ENCODE measurements at regions of chr12 and their contacts with region 1.

Region 1: GRCh38 chr12:75641031-75641780 is 129.8 kb upstream of the KRR1 start:
- DNase-seq: peak; percentile 78
- H3K4me3 Mint-ChIP-seq: peak overlapping the region; percentile 1
- H3K27ac Mint-ChIP-seq: peak overlapping the region; percentile 79
- H3K4me1 Mint-ChIP-seq: peaks cover 31% of the 10 kb centered on the region
- H3K27me3 Mint-ChIP-seq: no peaks in the 10 kb centered on the region

Region 2: DNA sequence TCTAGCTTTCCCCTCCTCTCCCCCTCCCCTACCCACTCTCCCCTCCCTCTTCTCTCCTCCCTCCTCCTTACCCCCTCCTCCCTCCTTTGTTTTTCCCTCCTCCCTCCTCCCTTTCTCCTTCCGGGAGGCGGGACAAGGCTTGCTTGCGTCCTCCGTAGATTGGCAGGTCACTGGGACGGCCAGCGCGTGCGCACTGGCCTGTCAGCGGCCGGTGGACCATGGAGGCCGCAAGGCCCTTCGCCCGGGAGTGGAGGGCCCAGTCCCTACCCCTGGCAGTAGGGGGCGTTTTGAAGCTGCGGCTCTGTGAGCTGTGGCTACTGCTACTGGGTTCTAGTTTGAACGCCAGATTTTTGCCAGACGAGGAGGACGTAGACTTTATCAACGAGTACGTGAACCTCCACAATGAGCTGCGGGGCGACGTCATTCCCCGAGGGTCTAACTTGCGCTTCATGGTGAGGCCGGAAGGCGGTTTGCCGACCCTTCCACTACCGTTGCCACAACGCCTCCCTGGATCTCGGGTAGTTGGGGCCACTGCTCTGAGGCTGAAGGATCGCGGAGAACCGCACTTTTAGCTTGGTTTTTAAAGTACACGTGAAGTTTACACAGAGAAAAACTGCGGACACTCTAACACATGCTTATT is 250.2 kb before region 1 on chr12 and contains the start of gene GLIPR1L2:
- intact Hi-C with region 1: loop called (anchors 10 kb)
- DNase-seq: peak; percentile 95
- H3K4me3 Mint-ChIP-seq: peak within 1 kb of the TSS; percentile 94
- H3K27ac Mint-ChIP-seq: peak within 1 kb of the TSS; percentile 92
- H3K4me1 Mint-ChIP-seq: peaks cover 27% of the 10 kb centered on the region
- H3K27me3 Mint-ChIP-seq: peaks cover 3% of the 10 kb centered on the region
- total RNA-seq, gene GLIPR1L2: 0.36 TPM in 1 of 2 replicates, not detected in the other

Region 3: GRCh38 chr12:75511116-75512048 is 129.8 kb before region 1 on chr12 and contains the start of gene KRR1:
- intact Hi-C with region 1: loop called (anchors 5 kb)
- DNase-seq: peak; percentile 97
- H3K4me3 Mint-ChIP-seq: peak within 1 kb of the TSS; percentile 98
- H3K27ac Mint-ChIP-seq: peak within 1 kb of the TSS; percentile 100
- H3K4me1 Mint-ChIP-seq: peaks cover 31% of the 10 kb centered on the region
- H3K27me3 Mint-ChIP-seq: peaks cover 3% of the 10 kb centered on the region
- total RNA-seq, gene KRR1: 134 and 141 TPM in 2 replicates

Region 4: DNA sequence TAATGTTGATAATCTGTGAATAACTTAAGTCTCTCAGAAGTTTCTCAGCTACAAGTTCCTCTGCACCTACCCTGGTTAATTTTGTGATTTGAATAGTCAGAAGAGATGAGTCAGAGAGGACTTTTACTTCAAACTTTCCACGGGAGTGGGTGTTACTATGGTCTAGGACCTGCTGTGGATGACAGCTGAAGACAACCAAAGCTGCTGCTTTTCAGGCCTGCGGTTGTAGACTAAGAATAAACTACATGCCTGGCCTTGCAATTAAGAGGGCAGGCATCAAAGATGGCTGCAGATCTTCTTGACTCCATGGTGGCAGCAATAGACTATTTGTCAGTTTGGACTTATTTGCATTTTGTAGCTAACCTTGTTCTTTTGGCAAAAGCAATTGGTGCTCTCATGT is 97.3 kb after region 1 on chr12:
- intact Hi-C with region 1: loop called (anchors 5 kb)
- DNase-seq: peak; percentile 64
- H3K4me3 Mint-ChIP-seq: no peak overlapping the region
- H3K27ac Mint-ChIP-seq: peak overlapping the region; percentile 59
- H3K4me1 Mint-ChIP-seq: peaks cover 17% of the 10 kb centered on the region
- H3K27me3 Mint-ChIP-seq: peaks cover 5% of the 10 kb centered on the region

Region 5: DNA sequence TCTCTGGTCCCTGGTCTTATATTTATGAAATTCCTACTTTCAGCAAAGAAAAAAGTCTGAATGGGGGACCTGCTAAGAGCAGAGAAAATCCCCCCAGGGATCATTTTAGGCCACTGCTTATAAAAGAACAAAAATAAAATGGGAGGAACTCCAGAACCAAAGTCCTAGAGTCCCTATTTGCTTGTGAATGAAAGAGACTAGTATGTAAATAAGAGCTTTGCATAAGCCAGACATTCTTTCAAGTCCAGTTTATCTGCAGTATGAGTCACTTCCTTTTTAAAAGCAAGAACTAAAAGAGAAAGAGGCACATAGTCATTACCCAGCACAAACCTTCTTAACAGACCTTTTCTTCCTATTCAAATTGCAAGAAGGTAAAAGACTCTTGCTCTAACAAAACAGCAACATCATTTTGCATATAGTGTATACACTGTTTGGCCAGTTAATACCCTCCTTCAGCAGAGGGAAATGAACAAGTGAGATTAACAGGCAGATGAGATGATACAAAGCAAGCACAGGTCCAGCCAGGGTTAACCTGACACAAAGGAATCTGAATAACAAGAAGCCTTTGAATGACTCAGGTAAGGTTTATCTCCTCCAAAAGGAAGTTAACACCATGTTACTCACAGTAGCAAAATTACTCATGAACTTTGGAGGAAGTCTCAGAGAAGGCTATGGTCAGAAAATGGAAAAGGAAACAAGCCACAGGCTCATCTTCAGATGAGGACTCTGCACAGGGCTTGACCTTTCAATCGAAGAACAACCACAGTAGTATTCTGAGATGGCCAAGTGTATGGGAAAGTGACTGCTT is 303.1 kb after region 1 on chr12:
- intact Hi-C with region 1: loop called (anchors 2 kb)
- DNase-seq: peak; percentile 77
- H3K4me3 Mint-ChIP-seq: peak overlapping the region; percentile 67
- H3K27ac Mint-ChIP-seq: peak overlapping the region; percentile 99
- H3K4me1 Mint-ChIP-seq: peaks cover 32% of the 10 kb centered on the region
- H3K27me3 Mint-ChIP-seq: no peaks in the 10 kb centered on the region

Region 6: DNA sequence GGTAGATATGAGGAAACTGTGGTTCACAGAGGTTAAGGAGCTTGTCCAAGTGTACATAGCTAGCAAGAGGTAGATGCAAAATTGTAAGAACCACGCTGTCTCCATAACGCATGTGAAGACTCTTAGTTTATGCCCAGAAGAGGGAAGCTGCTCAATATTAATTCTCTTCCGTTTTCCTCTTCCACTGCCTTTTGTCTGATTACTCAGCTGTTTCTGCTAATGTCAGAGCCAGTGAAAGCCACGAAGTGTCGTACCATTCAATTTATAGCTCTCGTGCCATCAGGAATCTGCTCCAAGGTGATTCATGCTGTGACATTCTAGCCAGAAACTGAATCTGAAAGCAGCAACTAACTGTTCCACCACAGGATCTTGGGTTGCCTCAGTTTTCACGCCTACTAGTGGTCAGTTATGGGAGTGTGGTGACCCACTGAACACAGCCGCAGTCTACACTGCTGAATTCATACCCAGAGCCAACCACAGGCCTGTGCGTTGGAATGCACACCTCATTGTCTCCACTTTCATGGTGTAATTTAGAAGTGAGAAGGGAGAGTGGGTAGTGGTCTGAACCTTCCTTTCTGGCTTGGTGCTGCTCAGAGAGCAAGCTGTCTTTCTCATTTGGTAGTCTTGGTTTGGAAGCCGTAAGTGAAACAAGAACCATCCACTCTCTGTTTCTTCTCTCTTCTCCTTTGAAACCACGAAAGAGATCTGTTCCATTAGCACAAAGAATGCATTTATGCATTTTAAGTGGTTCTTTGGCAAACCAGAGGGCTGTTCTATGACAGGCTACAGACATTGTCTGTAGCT is 517.5 kb after region 1 on chr12:
- intact Hi-C with region 1: loop called (anchors 2 kb)
- DNase-seq: peak; percentile 91
- H3K4me3 Mint-ChIP-seq: peak overlapping the region; percentile 6
- H3K27ac Mint-ChIP-seq: peak overlapping the region; percentile 84
- H3K4me1 Mint-ChIP-seq: peaks cover 16% of the 10 kb centered on the region
- H3K27me3 Mint-ChIP-seq: peaks cover 30% of the 10 kb centered on the region

Measured in activated CD4-positive, alpha-beta T cell treated with anti-CD3 and anti-CD28 coated beads, Interleukin-2, amount 10 ng/mL, durations not matched to agents 24 days and 14 days (primary cell).